ENCODE measurements at regions of chr5 and their contacts with region 1.

Region 1: GRCh38 chr5:173045482-173045881 is 10.7 kb upstream of the CREBRF start:
- DNase-seq: peak; percentile 86 to 93
- H3K4me3 ChIP-seq: no peak overlapping the region
- H3K4me3 Mint-ChIP-seq: peak overlapping the region; percentile 45
- H3K27ac Mint-ChIP-seq: peak overlapping the region; percentile 88
- H3K4me1 ChIP-seq: peaks cover 56% of the 10 kb centered on the region
- H3K4me1 Mint-ChIP-seq: peaks cover 23% of the 10 kb centered on the region
- H3K27me3 ChIP-seq: no peaks in the 10 kb centered on the region
- H3K27me3 Mint-ChIP-seq: no peaks in the 10 kb centered on the region
- CTCF ChIP-seq: peak in 1 of 2 experiments; percentile 11

Region 2: DNA sequence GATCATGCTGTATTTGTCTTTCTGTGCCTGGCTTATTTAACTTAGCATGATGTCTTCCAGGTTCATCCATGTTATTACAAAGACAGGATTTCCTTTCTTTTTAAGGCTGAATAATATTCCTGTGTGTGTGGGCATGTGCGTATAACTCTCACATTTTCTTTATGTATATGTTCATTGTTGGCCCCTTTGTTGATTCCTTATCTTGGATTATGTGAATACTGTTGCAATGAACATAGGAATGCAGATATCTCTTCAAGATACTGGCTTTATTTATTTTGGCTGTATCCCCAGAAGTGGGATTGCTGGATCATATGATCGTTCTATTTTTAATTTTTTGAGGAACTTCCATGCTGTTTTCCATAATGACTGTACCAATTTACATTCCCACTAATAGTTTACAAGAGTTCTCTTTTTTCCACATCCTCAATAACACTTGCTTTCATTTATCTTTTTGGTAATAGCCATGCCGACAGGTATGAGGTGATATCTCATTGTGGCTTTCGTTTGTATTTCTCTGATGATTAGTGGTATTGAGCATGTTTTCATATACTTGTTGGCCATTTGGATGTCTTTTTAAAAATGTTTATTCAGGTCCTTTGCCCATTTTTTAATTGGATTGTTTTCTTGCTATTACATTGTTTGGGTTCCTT is 48.7 kb after region 1 on chr5:
- CTCF ChIA-PET with region 1: no interaction called
- POLR2A ChIA-PET with region 1: interaction called, 14 read pairs
- intact Hi-C with region 1: no loop called
- DNase-seq: peak in 1 of 2 experiments; percentile 9
- H3K4me3 ChIP-seq: no peak overlapping the region
- H3K4me3 Mint-ChIP-seq: no peak overlapping the region
- H3K27ac Mint-ChIP-seq: peak overlapping the region; percentile 23
- H3K4me1 ChIP-seq: peaks cover 19% of the 10 kb centered on the region
- H3K4me1 Mint-ChIP-seq: peaks cover 12% of the 10 kb centered on the region
- H3K27me3 ChIP-seq: no peaks in the 10 kb centered on the region
- H3K27me3 Mint-ChIP-seq: no peaks in the 10 kb centered on the region
- CTCF ChIP-seq: no peak

Measured in Caco-2 (cell line).